GM10248 (cell line): ENCODE measurements at regions of chr4 and their contacts with region 1.

Region 1: GRCh38 chr4:38856524-38857337 is at the start of gene TLR6:
- DNase-seq: peak; percentile 47
- CTCF ChIP-seq: peak; percentile 52

Region 2: GRCh38 chr4:38523054-38523453 is 333.7 kb before region 1 on chr4:
- CTCF ChIA-PET with region 1: no interaction called
- POLR2A ChIA-PET with region 1: no interaction called
- DNase-seq: no peak
- CTCF ChIP-seq: no peak

Region 3: DNA sequence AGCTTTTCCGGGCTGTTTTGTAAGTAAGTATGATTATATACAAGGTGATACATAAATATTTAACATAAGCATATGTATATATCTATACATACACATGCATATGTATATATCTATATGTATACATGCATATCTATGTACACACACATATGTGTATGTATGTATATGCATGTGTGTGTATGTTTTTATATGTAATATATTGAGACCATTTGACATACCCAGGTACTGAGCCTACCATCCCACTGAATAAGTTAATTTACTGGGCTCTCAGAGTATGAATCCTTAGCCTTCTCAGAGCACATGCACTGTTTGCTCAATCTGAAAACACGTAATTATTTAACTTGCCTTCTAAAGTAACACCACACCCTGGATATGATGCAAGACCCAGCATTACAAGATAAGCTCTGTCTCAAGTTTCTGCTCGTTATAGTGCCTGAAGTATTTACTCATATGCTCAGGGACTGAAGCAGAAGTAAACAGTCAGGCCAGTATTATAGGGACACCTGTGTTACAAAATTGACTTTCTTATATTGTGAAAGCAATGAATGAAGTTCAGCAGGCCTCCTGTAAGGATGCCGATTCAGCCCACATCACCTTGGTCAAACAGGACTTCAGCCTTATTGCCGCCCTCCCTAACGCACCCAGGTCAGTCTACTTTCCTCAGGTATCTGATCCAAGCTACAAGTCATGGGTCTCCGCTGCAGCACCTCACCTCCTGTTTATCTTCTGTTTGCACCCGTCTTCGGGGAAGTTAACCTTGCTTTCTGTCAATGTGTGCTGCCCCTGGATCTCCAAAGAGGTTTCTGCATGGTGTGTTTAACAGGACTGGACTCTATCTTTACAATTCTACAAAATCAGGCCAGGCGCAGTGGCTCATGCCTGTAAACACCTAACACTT is 235.7 kb before region 1 on chr4:
- CTCF ChIA-PET with region 1: no interaction called
- POLR2A ChIA-PET with region 1: no interaction called
- DNase-seq: no peak
- CTCF ChIP-seq: no peak

Region 4: DNA sequence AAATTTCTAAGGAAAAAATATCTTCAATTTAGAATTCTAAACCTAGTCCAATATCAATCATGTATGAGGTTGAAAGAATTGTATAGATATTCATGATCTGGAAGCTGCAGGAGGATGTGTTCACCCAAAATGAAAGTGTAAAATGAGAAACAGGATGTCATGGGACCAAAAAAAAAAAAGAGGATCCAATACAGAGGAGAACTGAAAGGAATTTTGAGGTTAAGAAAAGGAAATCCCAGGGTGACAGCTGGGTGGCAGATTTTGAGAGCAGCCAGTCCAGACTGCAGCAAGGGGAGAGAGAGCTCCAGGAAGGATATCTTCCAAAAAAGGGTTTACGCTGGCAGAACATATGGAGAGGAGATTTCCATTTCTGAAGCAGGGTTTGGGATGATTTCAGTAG is 112.9 kb before region 1 on chr4:
- CTCF ChIA-PET with region 1: interaction called, 15 read pairs
- POLR2A ChIA-PET with region 1: no interaction called
- DNase-seq: no peak
- CTCF ChIP-seq: no peak

Region 5: DNA sequence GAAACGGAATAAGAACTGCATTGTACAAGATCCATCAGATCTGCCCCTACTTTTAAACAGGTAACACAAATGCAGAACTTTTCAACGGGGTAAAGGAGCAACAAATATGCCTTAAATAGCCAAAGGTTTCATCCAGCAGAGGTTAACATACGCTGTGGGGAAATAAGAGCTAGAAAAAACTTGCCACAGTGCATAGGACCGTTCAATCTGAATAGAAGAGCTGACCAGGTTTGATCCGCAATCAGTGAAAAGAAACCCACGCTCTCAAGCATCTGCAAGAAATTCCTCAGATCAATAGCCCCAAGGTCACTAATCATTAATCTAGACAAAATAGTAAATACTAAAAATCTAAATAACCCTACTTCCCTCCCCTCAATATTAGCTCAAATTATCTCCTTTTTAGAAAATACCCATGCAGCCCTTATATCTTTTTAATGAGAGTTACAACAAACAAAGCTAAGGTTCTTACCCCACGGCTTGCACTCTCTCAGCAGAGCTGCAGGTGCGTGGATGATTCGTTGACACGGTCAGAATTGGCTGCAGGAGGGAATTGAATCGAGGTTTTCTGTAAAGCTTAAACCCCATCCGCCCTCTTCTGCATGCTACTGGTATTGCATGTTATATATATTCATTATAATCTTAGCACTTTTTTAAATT is 74.2 kb before region 1 on chr4 and contains the start of gene TLR10:
- CTCF ChIA-PET with region 1: interaction called, 66 read pairs
- POLR2A ChIA-PET with region 1: no interaction called
- DNase-seq: peak; percentile 67
- CTCF ChIP-seq: peak; percentile 55

Region 6: DNA sequence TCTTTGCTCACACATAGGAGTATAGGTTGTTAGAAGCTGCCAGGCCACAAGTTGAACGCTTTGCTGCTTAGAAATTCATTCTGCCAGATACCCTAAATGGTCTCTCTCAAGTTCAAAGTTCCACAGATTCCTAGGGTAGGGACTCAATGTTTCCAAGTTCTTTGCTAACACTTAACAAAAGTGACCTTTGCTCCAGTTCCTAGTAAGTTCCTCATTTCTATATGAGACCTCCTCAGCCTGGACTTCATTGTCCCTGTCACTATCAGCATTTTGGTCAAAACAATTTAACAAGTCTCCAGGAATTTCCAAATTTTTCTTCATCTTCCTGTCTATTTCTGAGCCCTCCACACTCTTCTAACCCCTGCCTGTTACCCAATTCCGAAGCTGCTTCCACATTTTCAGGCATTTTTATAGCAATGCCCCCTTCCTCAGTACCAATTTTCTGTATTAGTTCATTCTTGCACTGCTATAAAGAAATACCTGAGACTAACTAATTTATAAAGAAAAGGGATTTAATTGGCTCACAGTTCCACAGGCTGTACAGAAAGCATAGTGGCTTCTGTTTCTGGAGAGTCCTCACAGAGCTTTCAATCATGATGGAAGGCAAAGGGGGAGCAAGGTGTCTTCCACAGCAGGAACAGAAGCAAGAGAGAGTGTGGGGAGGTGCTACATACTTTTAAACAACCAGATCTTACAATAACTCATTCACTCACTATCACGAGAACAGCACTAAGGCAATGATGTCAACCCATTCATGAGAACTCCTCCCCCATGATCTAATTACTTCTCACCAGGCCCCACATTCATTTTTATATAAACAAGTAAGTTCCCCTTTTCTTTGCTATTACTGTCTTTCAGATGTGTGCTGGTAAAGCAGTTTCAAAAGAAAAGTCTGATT is 40.6 kb before region 1 on chr4:
- CTCF ChIA-PET with region 1: interaction called, 13 read pairs
- POLR2A ChIA-PET with region 1: interaction called, 3 read pairs
- DNase-seq: no peak
- CTCF ChIP-seq: no peak

Region 7: GRCh38 chr4:38867478-38868058 is 10.8 kb after region 1 on chr4 and contains the start of gene FAM114A1:
- CTCF ChIA-PET with region 1: interaction called, 79 read pairs
- POLR2A ChIA-PET with region 1: no interaction called
- DNase-seq: peak; percentile 92
- CTCF ChIP-seq: no peak

Region 8: GRCh38 chr4:38889143-38889542 is 32.4 kb after region 1 on chr4:
- CTCF ChIA-PET with region 1: interaction called, 24 read pairs
- POLR2A ChIA-PET with region 1: no interaction called
- DNase-seq: peak; percentile 69
- CTCF ChIP-seq: no peak

Region 9: DNA sequence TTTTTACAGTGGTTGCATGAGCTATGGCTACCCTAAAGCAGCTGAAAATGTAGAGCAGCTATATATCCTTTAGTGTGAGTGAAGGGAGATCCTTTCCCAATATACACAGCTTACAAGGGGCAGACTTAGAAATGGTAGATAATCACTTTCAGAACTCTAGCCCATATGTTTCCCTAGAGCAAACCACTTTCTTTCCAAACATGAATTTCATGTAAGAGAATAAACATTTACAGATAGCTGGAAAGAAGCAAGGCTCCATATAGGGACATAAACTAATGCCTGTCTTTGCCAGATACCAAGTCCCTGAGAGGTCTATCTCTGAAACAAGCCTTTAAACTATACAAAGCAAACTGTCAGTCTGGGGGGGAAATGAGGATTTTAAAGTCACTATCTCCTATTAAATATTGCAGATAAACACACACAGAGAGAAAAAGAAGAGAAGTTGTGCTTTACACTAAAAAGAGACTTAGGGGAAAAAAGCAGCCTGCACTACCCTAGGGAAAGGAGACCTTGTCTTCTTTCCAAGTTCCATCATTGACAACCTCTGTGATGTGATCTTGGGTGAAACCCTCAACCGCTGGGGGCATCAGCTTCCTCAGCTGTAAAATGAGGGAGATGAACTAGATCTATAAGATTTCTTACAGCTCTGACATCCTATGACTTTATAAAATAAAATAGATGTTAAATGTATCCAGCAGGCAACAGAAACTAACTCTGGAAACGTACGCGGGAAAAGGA is 101.9 kb after region 1 on chr4:
- CTCF ChIA-PET with region 1: no interaction called
- POLR2A ChIA-PET with region 1: no interaction called
- DNase-seq: no peak
- CTCF ChIP-seq: no peak